ENCODE measurements at regions of chr19 and their contacts with region 1.

Region 1: GRCh38 chr19:16062789-16063188 is 13.5 kb upstream of the TPM4 start:
- DNase-seq: peak; percentile 57
- H3K4me3 Mint-ChIP-seq: no peak overlapping the region
- H3K27ac Mint-ChIP-seq: peak overlapping the region; percentile 57
- H3K4me1 Mint-ChIP-seq: peaks cover 12% of the 10 kb centered on the region
- H3K27me3 Mint-ChIP-seq: no peaks in the 10 kb centered on the region
- CTCF ChIP-seq: peak; percentile 87

Region 2: GRCh38 chr19:16051254-16052025 is 11.3 kb before region 1 on chr19:
- CTCF ChIA-PET with region 1: interaction called, 11 read pairs
- POLR2A ChIA-PET with region 1: no interaction called
- intact Hi-C with region 1: no loop called
- DNase-seq: peak; percentile 34
- H3K4me3 Mint-ChIP-seq: no peak overlapping the region
- H3K27ac Mint-ChIP-seq: no peak overlapping the region
- H3K4me1 Mint-ChIP-seq: no peaks in the 10 kb centered on the region
- H3K27me3 Mint-ChIP-seq: peaks cover 11% of the 10 kb centered on the region
- CTCF ChIP-seq: no peak

Region 3: GRCh38 chr19:16076154-16076957 is 13.6 kb after region 1 on chr19 and contains the start of gene TPM4:
- CTCF ChIA-PET with region 1: interaction called, 9 read pairs
- POLR2A ChIA-PET with region 1: interaction called, 51 read pairs
- intact Hi-C with region 1: loop called (anchors 1 kb)
- DNase-seq: peak; percentile 94
- H3K4me3 Mint-ChIP-seq: peak within 1 kb of the TSS; percentile 71
- H3K27ac Mint-ChIP-seq: peak within 1 kb of the TSS; percentile 99
- H3K4me1 Mint-ChIP-seq: peaks cover 19% of the 10 kb centered on the region
- H3K27me3 Mint-ChIP-seq: no peaks in the 10 kb centered on the region
- CTCF ChIP-seq: no peak
- total RNA-seq, gene TPM4: 355 and 424 TPM in 2 replicates